ENCODE measurements at regions of chr19 and their contacts with region 1.

Region 1: DNA sequence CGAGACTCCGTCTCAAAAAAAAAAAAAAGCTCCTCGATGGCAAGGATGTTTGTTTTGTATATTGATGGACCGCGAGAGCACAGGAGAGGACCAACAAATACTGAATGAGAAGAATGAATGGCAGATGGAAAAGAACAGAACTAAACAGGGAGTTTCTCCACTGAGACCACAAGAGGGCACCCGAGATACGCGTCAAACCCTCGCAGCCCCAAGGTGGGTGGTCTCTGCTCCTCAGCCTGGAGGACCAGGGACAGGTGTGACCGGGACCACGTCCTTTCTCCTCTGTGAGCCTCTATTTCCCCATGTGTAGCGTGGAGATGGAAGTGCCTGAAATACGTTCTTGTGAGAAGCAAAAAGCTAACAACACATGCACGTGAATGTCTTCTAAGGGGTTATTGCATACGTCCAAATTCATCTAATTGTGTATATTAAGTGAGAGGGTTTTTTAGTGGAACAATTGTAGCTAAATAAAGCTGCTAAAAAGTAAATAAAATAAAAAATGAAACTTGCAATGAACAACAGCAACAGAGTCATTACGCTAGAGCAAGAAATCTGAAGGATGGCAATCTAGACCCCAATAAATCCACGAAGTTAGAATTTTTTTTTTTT is 8.3 kb upstream of the CDC42EP5 start:
- DNase-seq: no peak
- H3K4me3 ChIP-seq: no peak overlapping the region
- H3K27ac ChIP-seq: no peak overlapping the region
- H3K4me1 ChIP-seq: peaks cover 0 to 5% (median 2%) of the 10 kb centered on the region in 3 donors
- H3K27me3 ChIP-seq: peaks cover 0 to 52% (median 0%) of the 10 kb centered on the region in 4 donors
- CTCF ChIP-seq: peak in 4 of 6 experiments; percentile 19 to 66 (median 30)
- POLR2A ChIP-seq: no peak

Region 2: DNA sequence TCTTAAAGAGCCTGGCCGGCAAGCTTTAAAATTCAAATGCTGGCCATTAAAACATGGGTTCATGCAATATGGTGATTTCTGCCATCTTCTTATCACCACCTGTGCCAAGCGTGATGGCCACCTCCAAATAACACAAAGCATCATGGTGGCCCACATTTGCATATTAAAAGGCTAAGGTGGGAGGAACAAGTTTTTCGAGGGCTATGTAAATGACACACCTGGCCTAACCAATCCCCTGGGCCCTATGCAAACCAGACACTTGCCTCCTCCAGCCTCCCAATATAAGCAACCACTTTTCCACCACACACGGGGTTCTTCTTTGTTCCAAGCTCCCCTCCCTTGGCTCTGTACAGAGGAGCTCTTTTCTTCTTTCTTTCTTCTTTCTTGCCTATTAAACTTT is 195.8 kb after region 1 on chr19:
- intact Hi-C with region 1: loop called (anchors 5 kb)
- DNase-seq: no peak
- H3K4me3 ChIP-seq: no peak overlapping the region
- H3K27ac ChIP-seq: no peak overlapping the region
- H3K4me1 ChIP-seq: no peaks in the 10 kb centered on the region
- H3K27me3 ChIP-seq: peaks cover 0 to 15% (median 2%) of the 10 kb centered on the region in 4 donors
- CTCF ChIP-seq: no peak
- POLR2A ChIP-seq: no peak

Measured in esophagus squamous epithelium (tissue), 5 donors.